HCT116 (cell line): ENCODE measurements at regions of chr6 and their contacts with region 1.

Region 1: GRCh38 chr6:63516186-63516944 is 55.9 kb upstream of the LOC128125822 start:
- DNase-seq: peak; percentile 83
- ATAC-seq: peak; percentile 67
- H3K4me3 ChIP-seq: no peak overlapping the region
- H3K27ac ChIP-seq: peak overlapping the region; percentile 73
- H3K4me1 ChIP-seq: peaks cover 19 to 49% of the 10 kb centered on the region in 2 experiments
- H3K27me3 ChIP-seq: no peaks in the 10 kb centered on the region
- CTCF ChIP-seq: no peak
- POLR2A ChIP-seq: no peak
- RAD21 ChIP-seq: peak; percentile 32; the same call in 1 of the 2 replicates

Region 2: GRCh38 chr6:63527658-63528514 is 11.5 kb after region 1 on chr6:
- CTCF ChIA-PET with region 1: interaction called, 7 read pairs
- POLR2A ChIA-PET with region 1: interaction called, 10 read pairs
- RAD21 ChIA-PET with region 1: no interaction called
- intact Hi-C with region 1: no loop called
- DNase-seq: peak; percentile 94
- ATAC-seq: peak; percentile 81
- H3K4me3 ChIP-seq: peak overlapping the region in 1 of 2 experiments; percentile 16; a peak in 1 of 4 replicates
- H3K27ac ChIP-seq: peak overlapping the region; percentile 72
- H3K4me1 ChIP-seq: peaks cover 29 to 41% of the 10 kb centered on the region in 2 experiments
- H3K27me3 ChIP-seq: no peaks in the 10 kb centered on the region
- CTCF ChIP-seq: no peak
- POLR2A ChIP-seq: no peak
- RAD21 ChIP-seq: peak; percentile 32

Region 3: DNA sequence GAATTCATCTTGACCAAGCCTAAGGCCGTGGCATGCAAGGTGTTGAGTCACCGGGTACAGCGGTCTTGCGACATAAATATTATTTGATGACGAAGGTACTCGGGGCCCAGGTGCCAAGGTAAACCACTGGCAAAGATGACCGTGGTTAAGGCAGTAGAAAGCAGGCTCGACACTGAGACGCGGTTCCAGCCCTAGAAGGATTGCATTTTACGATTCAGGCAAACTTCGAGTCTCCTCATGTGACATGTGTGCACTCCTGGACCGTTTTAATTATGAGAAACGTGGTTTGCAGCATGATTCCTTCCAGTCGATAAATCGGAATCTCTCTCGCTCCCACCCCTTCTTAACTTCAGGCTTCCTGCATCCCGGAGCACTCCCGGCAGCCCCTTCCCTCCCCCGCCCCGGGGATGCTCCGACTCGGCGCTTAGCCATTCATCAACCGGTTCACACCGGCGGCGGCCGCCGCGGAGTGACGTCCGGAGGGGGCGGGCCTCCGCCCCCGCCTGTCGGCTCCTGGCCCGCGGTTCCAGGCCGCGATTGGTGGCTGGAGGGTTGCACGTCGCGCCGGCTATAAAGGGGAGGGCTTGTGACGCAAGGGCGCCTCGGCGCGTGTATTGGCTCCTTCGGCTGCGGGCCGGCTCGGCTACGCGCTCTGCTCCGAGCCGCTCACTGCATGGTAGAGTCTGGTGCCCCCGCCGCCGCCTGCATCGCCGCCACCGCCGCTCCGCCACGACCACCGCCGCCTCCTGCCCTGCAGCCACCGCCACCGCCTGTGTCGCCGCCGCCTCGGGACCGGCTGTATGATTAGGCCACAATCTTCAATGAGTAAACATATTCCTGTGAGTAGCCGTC is 55.7 kb after region 1 on chr6 and contains the starts of genes LOC128125822 and PTP4A1:
- CTCF ChIA-PET with region 1: no interaction called
- POLR2A ChIA-PET with region 1: interaction called, 3 read pairs
- RAD21 ChIA-PET with region 1: no interaction called
- intact Hi-C with region 1: loop called (anchors 1 kb)
- DNase-seq: peak; percentile 92
- ATAC-seq: peak; percentile 87
- H3K4me3 ChIP-seq: peak within 1 kb of the TSS; percentile 69 to 79
- H3K27ac ChIP-seq: peak within 1 kb of the TSS; percentile 98
- H3K4me1 ChIP-seq: peaks cover 12 to 41% of the 10 kb centered on the region in 2 experiments
- H3K27me3 ChIP-seq: no peaks in the 10 kb centered on the region
- CTCF ChIP-seq: no peak; a peak in 1 of 6 replicates
- POLR2A ChIP-seq: peak; percentile 51
- RAD21 ChIP-seq: no peak; the same call in 1 of the 2 replicates
- total RNA-seq, gene PTP4A1: 123 TPM